Gastrocnemius medialis (tissue), 4 donors: ENCODE measurements at regions of chr16 and their contacts with region 1.

Region 1: GRCh38 chr16:19886073-19886941 is 1.7 kb upstream of the GPRC5B start:
- DNase-seq: peak in 1 of 2 donors; percentile 56
- ATAC-seq: peak; percentile 8 to 28
- H3K4me3 ChIP-seq: peak overlapping the region; percentile 80 to 93 (median 82)
- H3K27ac ChIP-seq: peak overlapping the region in 1 of 4 donors; percentile 99
- H3K4me1 ChIP-seq: peaks cover 22 to 28% of the 10 kb centered on the region in 2 donors
- H3K27me3 ChIP-seq: no peaks in the 10 kb centered on the region
- CTCF ChIP-seq: peak in 4 of 5 experiments; percentile 99 to 100 (median 100)
- POLR2A ChIP-seq: no peak

Region 2: GRCh38 chr16:19067349-19068236 is 818.7 kb before region 1 on chr16 and contains the start of gene COQ7:
- in situ Hi-C with region 1: no loop called
- intact Hi-C with region 1: loop called (anchors 5 kb)
- DNase-seq: peak; percentile 98 to 99
- ATAC-seq: peak; percentile 95 to 98
- H3K4me3 ChIP-seq: peak within 1 kb of the TSS; percentile 75 to 95 (median 78)
- H3K27ac ChIP-seq: peak within 1 kb of the TSS; percentile 94 to 99 (median 96)
- H3K4me1 ChIP-seq: peaks cover 14 to 20% of the 10 kb centered on the region in 2 donors
- H3K27me3 ChIP-seq: no peaks in the 10 kb centered on the region
- CTCF ChIP-seq: no peak
- POLR2A ChIP-seq: peak; percentile 79 to 80
- total RNA-seq, gene COQ7: 15.1 to 36.2 (median 21.7) TPM

Region 3: GRCh38 chr16:19583665-19584300 is 302.5 kb before region 1 on chr16:
- in situ Hi-C with region 1: no loop called
- intact Hi-C with region 1: loop called (anchors 1 kb)
- DNase-seq: no peak
- ATAC-seq: peak; percentile 50 to 58
- H3K4me3 ChIP-seq: no peak overlapping the region
- H3K27ac ChIP-seq: no peak overlapping the region
- H3K4me1 ChIP-seq: no peaks in the 10 kb centered on the region
- H3K27me3 ChIP-seq: no peaks in the 10 kb centered on the region
- CTCF ChIP-seq: peak in 4 of 5 experiments; percentile 28 to 77 (median 51)
- POLR2A ChIP-seq: no peak

Region 4: GRCh38 chr16:19601083-19601976 is 285.0 kb before region 1 on chr16:
- in situ Hi-C with region 1: loop called in 3 of 4 experiments (anchors 5 to 10 kb)
- intact Hi-C with region 1: loop called (anchors 1 kb)
- DNase-seq: no peak
- ATAC-seq: no peak
- H3K4me3 ChIP-seq: no peak overlapping the region
- H3K27ac ChIP-seq: no peak overlapping the region
- H3K4me1 ChIP-seq: peaks cover 4 to 7% of the 10 kb centered on the region in 2 donors
- H3K27me3 ChIP-seq: no peaks in the 10 kb centered on the region
- CTCF ChIP-seq: peak; percentile 44 to 66 (median 62)
- POLR2A ChIP-seq: no peak

Region 5: GRCh38 chr16:19696328-19696727 is 190.0 kb before region 1 on chr16:
- in situ Hi-C with region 1: loop called in 3 of 4 experiments (anchors 5 to 25 kb)
- intact Hi-C with region 1: no loop called
- DNase-seq: peak; percentile 55 to 67
- ATAC-seq: peak in 1 of 2 donors; percentile 57
- H3K4me3 ChIP-seq: no peak overlapping the region
- H3K27ac ChIP-seq: peak overlapping the region; percentile 68 to 77 (median 74)
- H3K4me1 ChIP-seq: peaks cover 28 to 54% of the 10 kb centered on the region in 2 donors
- H3K27me3 ChIP-seq: no peaks in the 10 kb centered on the region
- CTCF ChIP-seq: no peak
- POLR2A ChIP-seq: no peak

Region 6: GRCh38 chr16:19804538-19805323 is 81.6 kb before region 1 on chr16:
- in situ Hi-C with region 1: loop called in 1 of 4 experiments (anchors 10 kb)
- intact Hi-C with region 1: loop called (anchors 1 kb)
- DNase-seq: peak; percentile 43 to 51
- ATAC-seq: no peak
- H3K4me3 ChIP-seq: no peak overlapping the region
- H3K27ac ChIP-seq: peak overlapping the region in 3 of 4 donors; percentile 36 to 55 (median 54)
- H3K4me1 ChIP-seq: peaks cover 21% of the 10 kb centered on the region in 2 donors
- H3K27me3 ChIP-seq: no peaks in the 10 kb centered on the region
- CTCF ChIP-seq: no peak
- POLR2A ChIP-seq: no peak